Adrenal gland (tissue), 19 donors: ENCODE measurements at regions of chr2 and their contacts with region 1.

Region 1: DNA sequence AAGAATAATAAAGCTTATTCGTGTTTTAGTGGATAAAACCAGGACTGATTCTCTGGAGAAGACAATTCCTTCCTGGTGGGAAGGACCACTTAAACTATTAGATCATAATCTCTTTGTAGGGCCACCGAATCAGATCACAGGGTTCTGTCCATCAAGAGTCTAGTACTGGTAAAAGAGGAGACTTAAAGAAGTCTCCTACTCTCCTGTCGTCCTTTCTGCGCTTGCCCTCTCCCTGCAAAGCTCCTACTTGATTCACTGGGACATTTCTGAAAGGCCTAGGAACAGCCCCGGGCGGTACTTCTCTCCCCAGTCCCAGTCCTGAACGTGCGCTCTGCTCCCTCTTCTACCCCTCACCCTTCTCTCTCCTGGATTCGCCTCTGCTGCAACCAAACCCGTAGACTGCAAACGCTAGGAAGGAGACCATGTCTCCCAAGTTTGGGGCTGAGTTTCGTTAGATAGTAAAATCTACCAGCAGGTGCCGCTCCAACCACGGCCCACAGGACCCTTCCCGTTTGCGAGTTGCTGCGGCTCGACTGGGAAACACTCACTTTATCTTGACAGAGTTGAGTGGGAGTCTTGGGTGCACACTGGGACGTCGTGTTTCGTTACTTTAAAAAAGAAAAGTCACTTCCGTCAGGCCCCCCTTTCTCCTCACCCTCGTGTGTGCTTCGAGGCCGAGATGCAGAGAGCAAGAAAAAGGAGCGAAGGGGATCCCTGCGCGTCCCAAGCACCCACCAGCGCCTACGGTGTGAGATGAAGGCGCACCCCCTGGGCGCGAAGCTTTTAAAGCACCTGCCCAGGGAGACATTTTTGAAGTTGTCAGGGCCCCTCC is 923 bp downstream of the FIGLA start:
- DNase-seq: peak; percentile 41 to 76 (median 62)
- H3K4me3 ChIP-seq: peak overlapping the region in 1 of 4 donors; percentile 11
- H3K27ac ChIP-seq: no peak overlapping the region
- H3K4me1 ChIP-seq: peaks cover 5% of the 10 kb centered on the region in 2 donors
- H3K27me3 ChIP-seq: peaks cover 34% of the 10 kb centered on the region
- CTCF ChIP-seq: peak; percentile 33 to 59 (median 52)
- POLR2A ChIP-seq: no peak

Region 2: GRCh38 chr2:70656421-70657010 is 133.0 kb before region 1 on chr2:
- intact Hi-C with region 1: loop called (anchors 5 to 10 kb)
- DNase-seq: peak in 1 of 7 donors; percentile 11
- H3K4me3 ChIP-seq: no peak overlapping the region
- H3K27ac ChIP-seq: no peak overlapping the region
- H3K4me1 ChIP-seq: no peaks in the 10 kb centered on the region
- H3K27me3 ChIP-seq: peaks cover 25% of the 10 kb centered on the region
- CTCF ChIP-seq: no peak
- POLR2A ChIP-seq: no peak

Region 3: GRCh38 chr2:70935468-70936164 is 146.1 kb after region 1 on chr2 and contains the start of gene ATP6V1B1:
- intact Hi-C with region 1: loop called in 1 of 2 experiments (anchors 10 kb)
- DNase-seq: peak in 1 of 7 donors; percentile 17
- H3K4me3 ChIP-seq: no peak within 1 kb of the TSS
- H3K27ac ChIP-seq: no peak within 1 kb of the TSS
- H3K4me1 ChIP-seq: no peaks in the 10 kb centered on the region
- H3K27me3 ChIP-seq: no peaks in the 10 kb centered on the region
- CTCF ChIP-seq: no peak
- POLR2A ChIP-seq: no peak
- total RNA-seq, gene ATP6V1B1: 0.14 to 1.3 (median 0.58) TPM in 5 of 9 donors, not detected in the others

Region 4: DNA sequence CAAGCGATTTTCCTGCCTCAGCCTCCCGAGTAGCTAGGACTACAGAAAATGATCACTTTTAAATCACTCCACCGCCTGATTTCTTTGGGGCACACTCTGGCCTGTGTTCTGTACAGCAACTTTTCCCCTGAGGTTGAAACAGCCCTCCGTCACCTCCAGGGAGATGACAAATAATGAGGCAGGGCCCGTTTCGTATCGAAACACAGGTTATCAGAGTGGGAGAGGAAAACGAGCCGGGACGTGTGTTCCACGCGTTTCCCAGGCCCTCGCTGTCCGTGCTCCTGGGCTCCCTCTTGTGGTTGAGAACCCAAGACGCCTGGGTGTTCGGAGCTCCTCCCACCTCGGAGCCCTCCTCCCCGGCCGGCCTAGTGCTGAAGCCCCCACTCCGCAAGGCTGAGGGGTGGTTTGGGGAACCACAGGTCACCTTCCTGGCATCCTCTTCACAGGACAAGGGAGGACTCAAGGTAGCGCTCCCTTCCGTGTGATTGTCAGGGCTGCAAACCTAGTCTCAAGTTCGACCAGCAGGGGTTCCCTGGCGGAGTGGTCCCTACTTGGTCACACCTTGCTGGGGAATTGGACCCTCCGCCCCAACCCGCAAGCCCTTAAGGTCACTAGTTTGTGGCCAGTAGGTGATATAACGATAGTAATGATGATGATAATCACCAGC is 158.9 kb after region 1 on chr2:
- intact Hi-C with region 1: loop called in 1 of 2 experiments (anchors 5 kb)
- DNase-seq: peak; percentile 72 to 85 (median 81)
- H3K4me3 ChIP-seq: peak overlapping the region in 1 of 4 donors; percentile 41
- H3K27ac ChIP-seq: no peak overlapping the region
- H3K4me1 ChIP-seq: peaks cover 3 to 8% of the 10 kb centered on the region in 2 donors
- H3K27me3 ChIP-seq: peaks cover 5% of the 10 kb centered on the region
- CTCF ChIP-seq: peak; percentile 56 to 81 (median 76)
- POLR2A ChIP-seq: no peak